Endothelial cell of umbilical vein (primary cell): ENCODE measurements at regions of chr5 and their contacts with region 1.

Region 1: DNA sequence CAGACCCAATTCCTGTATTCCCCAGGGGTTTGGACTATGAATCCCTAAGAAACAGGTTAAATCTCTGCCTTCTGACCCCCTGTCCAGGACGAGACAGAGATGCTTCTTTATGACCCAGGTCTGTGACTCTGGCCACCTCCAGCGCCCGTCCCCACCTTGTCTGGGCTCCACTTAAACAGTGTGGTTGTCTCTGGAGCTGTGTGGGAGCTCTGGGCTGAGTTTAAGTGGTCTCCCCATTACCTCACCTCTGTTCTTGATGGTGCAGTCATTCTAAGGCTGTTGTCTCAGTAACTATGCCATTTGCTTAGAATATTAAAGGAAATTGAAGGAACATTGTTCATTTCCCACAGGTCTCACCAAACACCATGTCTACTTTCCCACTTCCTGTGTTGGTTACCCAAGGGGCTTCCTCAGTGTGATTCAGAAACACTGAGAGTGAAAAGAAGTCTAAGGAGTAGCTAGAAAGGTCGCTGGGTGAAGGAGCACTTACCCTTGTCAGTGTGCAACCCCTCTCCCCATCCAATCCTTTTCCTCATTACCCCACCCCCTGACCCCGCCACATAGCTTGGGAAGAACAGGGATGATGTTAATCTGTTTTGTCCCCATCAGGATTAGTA is 127.8 kb upstream of the CKMT2 start:
- DNase-seq: no peak
- H3K4me3 ChIP-seq: no peak overlapping the region
- H3K27ac ChIP-seq: no peak overlapping the region
- H3K4me1 ChIP-seq: no peaks in the 10 kb centered on the region
- H3K27me3 ChIP-seq: no peaks in the 10 kb centered on the region
- CTCF ChIP-seq: no peak
- POLR2A ChIP-seq: no peak

Region 2: GRCh38 chr5:80686757-80687156 is 418.6 kb before region 1 on chr5:
- CTCF ChIA-PET with region 1: interaction called, 100 read pairs
- POLR2A ChIA-PET with region 1: no interaction called
- dilution Hi-C with region 1: no loop called
- intact Hi-C with region 1: loop called (anchors 1 kb)
- DNase-seq: peak; percentile 27
- H3K4me3 ChIP-seq: no peak overlapping the region
- H3K27ac ChIP-seq: no peak overlapping the region
- H3K4me1 ChIP-seq: no peaks in the 10 kb centered on the region
- H3K27me3 ChIP-seq: no peaks in the 10 kb centered on the region
- CTCF ChIP-seq: peak; percentile 1 to 14
- POLR2A ChIP-seq: no peak

Region 3: DNA sequence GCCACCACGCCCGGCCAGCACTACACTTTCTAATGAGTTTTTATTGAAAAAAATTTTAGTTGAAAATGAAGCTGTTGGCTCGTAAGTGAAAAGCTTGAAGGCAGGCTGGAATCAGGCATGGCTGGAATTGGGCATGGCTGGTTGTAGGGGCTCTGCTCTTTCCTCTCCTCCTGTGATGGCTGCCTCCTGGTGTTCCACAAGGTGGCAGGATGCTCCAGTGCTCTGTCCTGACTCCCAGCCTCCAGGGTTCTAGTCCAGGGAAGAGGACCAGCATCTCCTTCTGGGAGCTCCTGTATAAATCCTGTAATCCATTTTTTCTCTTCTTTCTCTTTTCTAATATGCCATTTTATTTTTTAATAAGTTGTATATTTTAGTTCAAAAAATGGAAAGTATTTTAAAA is 393.4 kb before region 1 on chr5:
- CTCF ChIA-PET with region 1: interaction called, 48 read pairs
- POLR2A ChIA-PET with region 1: no interaction called
- dilution Hi-C with region 1: no loop called
- intact Hi-C with region 1: loop called (anchors 1 kb)
- DNase-seq: no peak
- H3K4me3 ChIP-seq: no peak overlapping the region
- H3K27ac ChIP-seq: no peak overlapping the region
- H3K4me1 ChIP-seq: peaks cover 6% of the 10 kb centered on the region
- H3K27me3 ChIP-seq: no peaks in the 10 kb centered on the region
- CTCF ChIP-seq: peak in 1 of 2 donors; percentile 57
- POLR2A ChIP-seq: no peak

Region 4: GRCh38 chr5:80935811-80936385 is 169.5 kb before region 1 on chr5:
- CTCF ChIA-PET with region 1: interaction called, 22 read pairs
- POLR2A ChIA-PET with region 1: no interaction called
- dilution Hi-C with region 1: no loop called
- intact Hi-C with region 1: no loop called
- DNase-seq: peak; percentile 17
- H3K4me3 ChIP-seq: no peak overlapping the region
- H3K27ac ChIP-seq: no peak overlapping the region
- H3K4me1 ChIP-seq: no peaks in the 10 kb centered on the region
- H3K27me3 ChIP-seq: no peaks in the 10 kb centered on the region
- CTCF ChIP-seq: peak in 1 of 2 donors; percentile 7
- POLR2A ChIP-seq: no peak

Region 5: DNA sequence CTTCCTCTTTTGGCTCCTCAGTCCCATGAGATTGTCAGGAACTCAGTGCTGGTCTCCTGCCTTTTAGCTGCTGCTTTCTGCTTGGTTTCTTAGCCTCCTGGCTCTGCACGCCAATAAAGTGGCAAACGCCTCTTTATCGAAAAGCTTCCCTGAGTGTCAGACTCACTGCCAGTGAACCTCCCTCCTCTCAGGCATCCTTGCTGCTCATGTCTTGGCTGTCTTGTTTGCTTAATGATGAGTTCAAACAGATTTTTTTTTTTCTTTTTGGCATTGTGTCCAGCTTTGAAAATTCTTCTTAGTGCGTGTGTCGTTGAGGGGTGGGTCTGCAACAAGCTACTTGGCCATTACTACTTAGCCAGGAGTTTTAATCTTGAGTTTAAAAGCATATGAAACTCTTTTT is 130.3 kb before region 1 on chr5:
- CTCF ChIA-PET with region 1: no interaction called
- POLR2A ChIA-PET with region 1: no interaction called
- dilution Hi-C with region 1: no loop called
- intact Hi-C with region 1: no loop called
- DNase-seq: no peak
- H3K4me3 ChIP-seq: no peak overlapping the region
- H3K27ac ChIP-seq: no peak overlapping the region
- H3K4me1 ChIP-seq: no peaks in the 10 kb centered on the region
- H3K27me3 ChIP-seq: no peaks in the 10 kb centered on the region
- CTCF ChIP-seq: no peak
- POLR2A ChIP-seq: no peak

Region 6: GRCh38 chr5:81121836-81122630 is 16.7 kb after region 1 on chr5:
- CTCF ChIA-PET with region 1: interaction called, 11 read pairs
- POLR2A ChIA-PET with region 1: no interaction called
- dilution Hi-C with region 1: no loop called
- intact Hi-C with region 1: no loop called
- DNase-seq: no peak
- H3K4me3 ChIP-seq: no peak overlapping the region
- H3K27ac ChIP-seq: no peak overlapping the region
- H3K4me1 ChIP-seq: no peaks in the 10 kb centered on the region
- H3K27me3 ChIP-seq: no peaks in the 10 kb centered on the region
- CTCF ChIP-seq: no peak
- POLR2A ChIP-seq: no peak

Region 7: DNA sequence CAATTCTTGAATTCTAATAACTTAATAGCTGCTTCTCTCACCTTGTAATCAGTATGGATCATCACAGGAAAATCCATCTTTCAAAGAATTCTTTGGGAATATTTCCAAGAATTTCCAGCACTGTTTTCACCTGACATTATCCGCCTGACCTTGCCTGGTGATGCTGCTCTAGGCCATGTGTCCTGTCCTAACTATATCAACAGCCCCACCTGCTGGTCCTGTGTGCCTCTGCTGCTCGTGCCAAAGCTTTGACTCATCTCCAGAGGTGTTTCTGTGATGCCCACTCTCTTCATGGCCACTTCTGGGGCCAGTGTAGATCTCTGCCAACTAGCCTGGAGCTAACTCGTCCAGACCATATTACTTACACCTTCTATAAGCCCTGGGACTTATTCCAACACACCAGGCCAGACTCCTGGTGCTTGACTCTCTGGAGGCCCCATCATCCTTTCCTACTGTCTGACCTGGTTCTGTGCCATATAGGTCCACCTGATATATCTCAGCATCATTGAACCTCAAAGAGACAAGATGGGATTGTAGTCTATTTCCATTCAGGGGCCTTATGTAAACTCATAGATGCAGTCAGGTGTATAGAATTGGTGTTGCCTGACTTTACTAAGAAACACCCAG is 60.2 kb after region 1 on chr5:
- CTCF ChIA-PET with region 1: interaction called, 14 read pairs
- POLR2A ChIA-PET with region 1: no interaction called
- dilution Hi-C with region 1: no loop called
- intact Hi-C with region 1: no loop called
- DNase-seq: peak; percentile 51
- H3K4me3 ChIP-seq: no peak overlapping the region
- H3K27ac ChIP-seq: no peak overlapping the region
- H3K4me1 ChIP-seq: no peaks in the 10 kb centered on the region
- H3K27me3 ChIP-seq: no peaks in the 10 kb centered on the region
- CTCF ChIP-seq: peak; percentile 68 to 78
- POLR2A ChIP-seq: no peak

Region 8: DNA sequence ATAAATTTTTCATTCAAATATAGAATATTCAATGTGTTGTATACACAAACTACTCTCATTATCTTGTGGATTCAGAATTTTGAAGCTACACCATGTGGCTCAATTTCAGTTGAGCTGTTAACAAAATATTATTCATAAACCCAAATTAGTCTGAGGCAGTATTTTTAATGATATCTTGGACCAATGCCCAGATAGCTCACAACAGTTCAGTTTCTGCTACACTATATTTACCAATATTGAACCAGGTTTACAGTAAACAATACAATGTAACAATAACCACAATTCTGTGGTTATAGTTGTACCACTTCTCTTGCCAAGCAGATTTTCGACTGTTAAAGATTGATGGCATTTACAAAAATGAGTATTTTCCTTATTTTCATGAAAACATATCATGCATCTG is 545.6 kb after region 1 on chr5:
- CTCF ChIA-PET with region 1: no interaction called
- POLR2A ChIA-PET with region 1: no interaction called
- dilution Hi-C with region 1: no loop called
- intact Hi-C with region 1: no loop called
- DNase-seq: peak; percentile 17
- H3K4me3 ChIP-seq: no peak overlapping the region
- H3K27ac ChIP-seq: no peak overlapping the region
- H3K4me1 ChIP-seq: no peaks in the 10 kb centered on the region
- H3K27me3 ChIP-seq: no peaks in the 10 kb centered on the region
- CTCF ChIP-seq: no peak
- POLR2A ChIP-seq: no peak

Region 9: GRCh38 chr5:81708889-81709288 is 603.5 kb after region 1 on chr5:
- CTCF ChIA-PET with region 1: no interaction called
- POLR2A ChIA-PET with region 1: no interaction called
- dilution Hi-C with region 1: no loop called
- intact Hi-C with region 1: no loop called
- DNase-seq: no peak
- H3K4me3 ChIP-seq: no peak overlapping the region
- H3K27ac ChIP-seq: no peak overlapping the region
- H3K4me1 ChIP-seq: no peaks in the 10 kb centered on the region
- H3K27me3 ChIP-seq: no peaks in the 10 kb centered on the region
- CTCF ChIP-seq: no peak
- POLR2A ChIP-seq: no peak